Activated B cell treated with CpG ODN at 0.5 μM for 24 hours (primary cell): ENCODE measurements at regions of chr3 and their contacts with region 1.

Region 1: DNA sequence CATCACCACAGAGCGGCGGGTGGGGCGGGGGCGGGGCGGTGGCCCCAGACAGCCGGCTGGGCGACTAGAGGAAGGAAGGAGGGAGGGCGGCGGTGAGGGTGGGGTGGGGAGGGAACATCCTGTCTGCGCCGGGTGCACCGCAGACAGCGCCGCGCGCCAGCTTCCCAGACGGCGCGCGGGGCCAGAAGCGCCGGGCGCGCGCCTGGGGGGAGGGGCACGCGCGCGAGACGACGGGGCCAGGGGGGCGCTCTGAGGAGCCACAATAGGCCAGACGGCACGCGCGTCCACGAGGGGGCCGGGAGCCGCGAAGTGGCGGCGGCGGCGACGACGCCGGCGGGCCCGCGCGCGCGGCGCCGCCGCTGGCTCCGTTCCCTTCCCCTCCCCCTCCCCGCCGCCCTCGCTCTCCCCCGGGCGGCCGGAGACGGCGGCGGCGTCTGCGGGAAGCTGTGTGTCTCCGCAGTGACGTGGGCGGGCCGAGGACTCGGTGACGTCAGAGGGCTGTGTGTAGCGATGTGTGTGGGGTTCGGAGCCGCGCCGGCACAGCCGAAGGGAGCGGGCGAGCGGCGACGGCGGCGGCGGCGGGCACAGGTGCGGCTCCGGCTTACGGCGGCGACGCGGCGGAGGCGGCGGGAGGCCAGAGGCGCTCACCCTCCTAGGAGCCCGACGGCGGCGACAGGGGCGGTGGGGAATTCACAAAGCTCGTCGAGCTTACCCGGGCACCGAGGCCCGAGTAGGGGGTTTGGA is at the start of gene SKIL:
- DNase-seq: peak; percentile 92
- ATAC-seq: peak; percentile 53
- H3K4me3 Mint-ChIP-seq: peak within 1 kb of the TSS; percentile 89
- H3K27ac Mint-ChIP-seq: peak within 1 kb of the TSS; percentile 97
- H3K4me1 Mint-ChIP-seq: peaks cover 80% of the 10 kb centered on the region
- H3K27me3 Mint-ChIP-seq: no peaks in the 10 kb centered on the region
- CTCF ChIP-seq: no peak
- total RNA-seq, gene SKIL: 112 and 123 TPM in 2 replicates

Region 2: DNA sequence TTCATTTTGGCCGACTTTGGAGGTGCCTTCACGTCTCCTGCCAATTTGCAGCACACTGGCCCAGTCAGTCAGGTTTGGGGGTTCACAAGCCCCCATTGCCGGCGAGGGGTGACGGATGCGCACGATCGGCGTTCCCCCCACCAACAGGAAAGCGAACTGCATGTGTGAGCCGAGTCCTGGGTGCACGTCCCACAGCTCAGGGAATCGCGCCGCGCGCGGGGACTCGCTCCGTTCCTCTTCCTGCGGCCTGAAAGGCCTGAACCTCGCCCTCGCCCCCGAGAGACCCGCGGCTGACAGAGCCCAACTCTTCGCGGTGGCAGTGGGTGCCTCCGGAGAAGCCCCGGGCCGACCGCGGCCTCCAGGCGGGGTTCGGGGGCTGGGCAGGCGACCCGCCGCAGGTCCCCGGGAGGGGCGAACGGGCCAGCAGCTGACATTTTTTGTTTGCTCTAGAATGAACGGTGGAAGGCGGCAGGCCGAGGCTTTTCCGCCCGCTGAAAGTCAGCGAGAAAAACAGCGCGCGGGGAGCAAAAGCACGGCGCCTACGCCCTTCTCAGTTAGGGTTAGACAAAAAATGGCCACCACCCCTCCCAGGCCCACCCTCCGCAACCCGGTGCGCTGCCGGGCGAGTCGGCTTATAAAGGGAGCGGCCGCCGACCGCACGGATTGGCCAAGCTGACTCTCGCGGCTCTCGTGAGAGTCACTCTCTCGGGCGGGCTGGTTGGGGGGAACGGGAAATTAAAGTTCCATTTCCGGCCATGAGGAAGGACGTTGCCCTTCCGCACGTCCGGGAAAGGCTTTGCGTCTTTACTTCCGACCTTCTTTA is 592.7 kb before region 1 on chr3 and contains the start of gene TERC:
- CTCF ChIA-PET with region 1: no interaction called
- POLR2A ChIA-PET with region 1: interaction called, 31 read pairs
- intact Hi-C with region 1: loop called (anchors 2 kb)
- DNase-seq: peak; percentile 78
- ATAC-seq: peak; percentile 79
- H3K4me3 Mint-ChIP-seq: peak within 1 kb of the TSS; percentile 96
- H3K27ac Mint-ChIP-seq: peak within 1 kb of the TSS; percentile 99
- H3K4me1 Mint-ChIP-seq: peaks cover 25% of the 10 kb centered on the region
- H3K27me3 Mint-ChIP-seq: no peaks in the 10 kb centered on the region
- CTCF ChIP-seq: no peak
- total RNA-seq, gene TERC: 2.5 and 8.4 TPM in 2 replicates

Region 3: GRCh38 chr3:169846458-169847193 is 510.7 kb before region 1 on chr3:
- CTCF ChIA-PET with region 1: no interaction called
- POLR2A ChIA-PET with region 1: interaction called, 6 read pairs
- intact Hi-C with region 1: loop called (anchors 2 kb)
- DNase-seq: no peak
- ATAC-seq: peak; percentile 95
- H3K4me3 Mint-ChIP-seq: peak overlapping the region; percentile 67
- H3K27ac Mint-ChIP-seq: peak overlapping the region; percentile 92
- H3K4me1 Mint-ChIP-seq: peaks cover 57% of the 10 kb centered on the region
- H3K27me3 Mint-ChIP-seq: no peaks in the 10 kb centered on the region
- CTCF ChIP-seq: no peak

Region 4: DNA sequence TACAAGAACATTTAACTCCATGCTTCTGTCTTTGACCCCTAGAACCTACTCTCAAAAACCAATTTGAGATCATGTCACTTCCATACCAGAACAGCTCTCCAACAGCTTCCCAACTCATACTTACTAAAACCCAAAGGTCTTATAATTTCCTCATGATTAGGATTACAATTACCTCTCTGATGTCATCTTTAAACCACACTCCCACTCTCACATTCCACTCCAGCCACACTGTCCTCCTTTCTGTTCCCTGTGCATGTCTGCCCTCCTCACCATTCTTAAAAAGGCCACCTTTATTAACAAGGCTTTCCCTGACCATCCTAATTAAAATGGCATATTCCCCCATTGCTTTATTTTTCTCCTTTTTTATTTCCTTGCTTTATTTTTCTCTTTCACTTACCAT is 194.7 kb before region 1 on chr3:
- CTCF ChIA-PET with region 1: no interaction called
- POLR2A ChIA-PET with region 1: interaction called, 11 read pairs
- intact Hi-C with region 1: no loop called
- DNase-seq: no peak
- ATAC-seq: no peak
- H3K4me3 Mint-ChIP-seq: no peak overlapping the region
- H3K27ac Mint-ChIP-seq: peak overlapping the region; percentile 37
- H3K4me1 Mint-ChIP-seq: peaks cover 54% of the 10 kb centered on the region
- H3K27me3 Mint-ChIP-seq: no peaks in the 10 kb centered on the region
- CTCF ChIP-seq: no peak

Region 5: DNA sequence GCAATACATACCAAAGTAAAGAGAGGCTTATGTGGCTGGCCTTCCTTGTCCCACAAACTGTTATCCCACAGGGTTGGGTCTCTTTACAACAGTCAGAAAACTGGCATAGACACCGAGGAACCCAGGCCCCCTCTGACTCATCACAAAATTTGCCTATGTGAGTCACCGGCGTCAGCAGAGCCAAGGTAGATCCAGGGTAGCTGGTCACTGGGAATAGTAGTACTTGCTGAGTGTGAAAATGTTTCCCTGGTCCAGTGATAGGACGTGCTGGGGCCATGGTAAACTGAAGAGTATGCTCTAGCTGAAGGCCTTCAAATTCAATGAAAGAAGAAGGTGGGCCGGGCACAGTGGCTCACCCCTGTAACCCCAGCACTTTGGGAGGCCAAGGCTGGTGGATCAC is 27.0 kb before region 1 on chr3:
- CTCF ChIA-PET with region 1: no interaction called
- POLR2A ChIA-PET with region 1: interaction called, 32 read pairs
- intact Hi-C with region 1: loop called (anchors 1 kb)
- DNase-seq: no peak
- ATAC-seq: peak; percentile 79
- H3K4me3 Mint-ChIP-seq: peak overlapping the region; percentile 32
- H3K27ac Mint-ChIP-seq: peak overlapping the region; percentile 53
- H3K4me1 Mint-ChIP-seq: peaks cover 26% of the 10 kb centered on the region
- H3K27me3 Mint-ChIP-seq: no peaks in the 10 kb centered on the region
- CTCF ChIP-seq: no peak

Region 6: GRCh38 chr3:170397579-170398177 is 40.3 kb after region 1 on chr3:
- CTCF ChIA-PET with region 1: no interaction called
- POLR2A ChIA-PET with region 1: interaction called, 12 read pairs
- intact Hi-C with region 1: no loop called
- DNase-seq: no peak
- ATAC-seq: no peak
- H3K4me3 Mint-ChIP-seq: no peak overlapping the region
- H3K27ac Mint-ChIP-seq: no peak overlapping the region
- H3K4me1 Mint-ChIP-seq: peaks cover 22% of the 10 kb centered on the region
- H3K27me3 Mint-ChIP-seq: no peaks in the 10 kb centered on the region
- CTCF ChIP-seq: no peak

Region 7: DNA sequence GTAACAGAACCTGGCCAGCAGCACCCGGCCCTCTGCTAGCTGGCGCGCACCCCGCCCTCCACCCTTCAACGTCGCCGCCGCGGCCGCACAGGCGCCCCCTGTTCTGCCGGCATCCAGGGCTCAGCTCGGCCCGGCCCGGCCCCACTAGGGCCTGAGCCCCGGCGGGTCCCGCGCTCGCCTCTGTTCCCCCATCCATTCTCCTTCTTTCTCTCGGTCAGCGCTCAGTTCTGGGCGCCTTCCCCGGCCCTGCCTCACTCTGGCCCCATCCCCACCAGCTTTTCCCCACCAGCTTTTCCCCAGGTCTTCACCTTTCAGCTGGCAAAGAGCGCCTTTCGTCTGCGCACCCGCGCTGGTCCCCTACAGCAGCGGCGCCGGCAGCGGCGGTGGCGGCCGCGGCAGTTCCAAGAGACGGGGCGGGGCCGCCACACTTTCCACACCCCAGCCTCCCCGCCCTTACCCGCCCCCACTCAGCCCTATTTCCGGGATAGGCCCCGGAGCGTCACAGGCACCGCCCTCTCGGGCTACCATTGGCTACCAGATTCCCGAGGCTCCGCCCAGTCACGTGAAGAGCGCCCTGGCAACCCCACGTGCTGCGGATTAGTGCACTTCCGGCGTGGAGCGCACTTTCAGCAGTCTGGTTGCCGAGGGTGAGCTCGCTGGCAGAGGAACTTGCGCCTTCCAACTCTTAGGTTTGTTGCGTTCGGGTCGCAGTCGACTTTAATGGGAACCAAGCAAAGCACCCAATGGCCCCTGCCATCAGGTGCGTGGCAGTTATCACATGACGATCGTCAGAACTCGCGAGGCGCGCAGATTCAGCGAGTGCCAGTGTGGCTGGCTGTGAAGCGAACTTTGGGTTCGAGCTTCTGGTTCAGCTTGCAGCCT is 551.1 kb after region 1 on chr3 and contains the start of gene EIF5A2:
- CTCF ChIA-PET with region 1: no interaction called
- POLR2A ChIA-PET with region 1: no interaction called
- intact Hi-C with region 1: loop called (anchors 5 kb)
- DNase-seq: peak; percentile 77
- ATAC-seq: peak; percentile 95
- H3K4me3 Mint-ChIP-seq: peak within 1 kb of the TSS; percentile 94
- H3K27ac Mint-ChIP-seq: peak within 1 kb of the TSS; percentile 86
- H3K4me1 Mint-ChIP-seq: peaks cover 18% of the 10 kb centered on the region
- H3K27me3 Mint-ChIP-seq: no peaks in the 10 kb centered on the region
- CTCF ChIP-seq: no peak
- total RNA-seq, gene EIF5A2: 6.1 and 6.9 TPM in 2 replicates